ENCODE measurements at regions of chrX and their contacts with region 1.

Region 1: GRCh38 chrX:103376118-103376978 is at the start of gene BEX3:
- DNase-seq: no peak
- H3K4me3 ChIP-seq: peak within 1 kb of the TSS; percentile 58 to 73 (median 70)
- H3K27ac ChIP-seq: peak within 1 kb of the TSS; percentile 65 to 86 (median 84)
- H3K4me1 ChIP-seq: peaks cover 0 to 12% (median 3%) of the 10 kb centered on the region in 4 donors
- H3K27me3 ChIP-seq: no peaks in the 10 kb centered on the region
- CTCF ChIP-seq: no peak
- EP300 ChIP-seq: no peak
- POLR2A ChIP-seq: no peak
- total RNA-seq, gene BEX3: 119 to 137 (median 130) TPM

Region 2: GRCh38 chrX:102976793-102977495 is 399.4 kb before region 1 on chrX:
- intact Hi-C with region 1: no loop called
- DNase-seq: no peak
- H3K4me3 ChIP-seq: no peak overlapping the region
- H3K27ac ChIP-seq: no peak overlapping the region
- H3K4me1 ChIP-seq: no peaks in the 10 kb centered on the region
- H3K27me3 ChIP-seq: no peaks in the 10 kb centered on the region
- CTCF ChIP-seq: no peak
- EP300 ChIP-seq: no peak
- POLR2A ChIP-seq: no peak

Region 3: GRCh38 chrX:103356130-103356798 is 20.1 kb before region 1 on chrX and contains the start of gene TCEAL9:
- intact Hi-C with region 1: loop called (anchors 2 kb)
- DNase-seq: peak; percentile 92
- H3K4me3 ChIP-seq: peak within 1 kb of the TSS; percentile 64 to 76 (median 70)
- H3K27ac ChIP-seq: peak within 1 kb of the TSS; percentile 86 to 89 (median 88)
- H3K4me1 ChIP-seq: peaks cover 0 to 12% (median 4%) of the 10 kb centered on the region in 4 donors
- H3K27me3 ChIP-seq: no peaks in the 10 kb centered on the region
- CTCF ChIP-seq: no peak
- EP300 ChIP-seq: no peak
- POLR2A ChIP-seq: no peak
- total RNA-seq, gene TCEAL9: 47.3 to 69.3 (median 52.9) TPM

Region 4: GRCh38 chrX:103517246-103517645 is 140.9 kb after region 1 on chrX:
- intact Hi-C with region 1: no loop called
- DNase-seq: no peak
- H3K4me3 ChIP-seq: no peak overlapping the region
- H3K27ac ChIP-seq: no peak overlapping the region
- H3K4me1 ChIP-seq: no peaks in the 10 kb centered on the region
- H3K27me3 ChIP-seq: no peaks in the 10 kb centered on the region
- CTCF ChIP-seq: no peak
- EP300 ChIP-seq: no peak
- POLR2A ChIP-seq: no peak

Measured in esophagus muscularis mucosa (tissue), 4 donors.